Lower leg skin (tissue), 4 donors: ENCODE measurements at regions of chr1 and their contacts with region 1.

Region 1: DNA sequence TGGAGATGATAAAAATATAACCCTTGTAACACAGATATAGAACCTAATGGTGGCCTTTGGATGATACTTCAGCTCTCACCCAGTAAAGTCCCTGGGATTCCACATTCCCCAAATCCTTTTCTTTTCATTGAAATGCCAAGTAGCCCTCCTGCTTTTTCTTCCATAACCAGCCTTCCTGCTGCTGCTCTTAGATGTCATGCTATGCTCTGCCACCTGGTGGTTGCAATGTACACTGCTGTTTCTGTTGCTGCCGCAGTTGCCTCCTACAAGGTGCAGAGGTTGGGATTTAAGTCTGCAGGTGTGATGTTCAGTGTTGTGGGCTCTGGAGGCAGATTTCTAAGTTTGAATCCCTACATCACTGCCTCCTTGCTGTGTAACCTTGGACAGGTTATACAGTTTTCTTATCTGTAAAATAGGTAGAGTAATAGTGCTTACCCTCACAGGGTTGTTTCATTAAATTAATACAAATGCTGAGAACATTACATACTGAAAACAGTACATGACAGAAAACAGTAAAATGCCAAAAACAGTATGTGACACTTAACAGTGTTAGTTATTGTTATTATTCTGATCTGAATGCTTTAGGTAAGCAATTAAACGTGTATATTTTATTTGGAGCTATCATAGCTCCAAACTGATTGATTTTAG is 64.3 kb downstream of the CAMSAP2 start:
- DNase-seq: peak; percentile 77 to 93
- H3K4me3 ChIP-seq: no peak overlapping the region
- CTCF ChIP-seq: peak in 1 of 3 donors; percentile 76
- POLR2A ChIP-seq: no peak

Region 2: DNA sequence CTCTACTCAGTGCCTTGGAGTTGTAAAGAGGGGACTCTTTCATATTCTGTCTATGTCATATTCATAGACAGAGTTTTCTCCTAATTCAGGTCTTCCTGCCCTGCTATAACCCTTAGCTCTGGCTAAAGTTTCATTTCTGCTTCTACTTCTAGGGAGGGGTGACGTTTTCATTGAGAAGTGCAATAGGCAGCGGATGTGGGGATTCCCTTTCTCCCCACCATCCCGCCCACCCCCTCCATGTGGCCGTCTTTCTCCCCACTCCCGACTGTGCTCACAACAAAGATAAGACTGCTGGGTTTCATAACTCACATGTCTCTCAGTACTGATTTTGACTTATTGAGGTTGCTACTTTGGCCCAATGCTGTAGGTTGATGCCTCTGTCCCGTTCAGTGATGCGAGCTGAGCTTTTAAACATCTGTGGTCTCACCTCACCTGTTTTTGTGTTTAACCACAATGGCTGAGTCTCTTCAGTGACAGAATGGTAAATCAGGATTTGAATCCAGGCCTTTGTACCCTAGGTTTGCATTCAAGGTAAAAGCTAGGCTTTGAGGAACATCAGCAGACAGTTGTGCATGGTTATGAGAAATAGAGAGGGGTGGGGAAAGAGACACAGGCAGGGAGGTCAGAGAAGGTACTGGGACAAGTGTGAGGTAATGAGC is 174.6 kb before region 1 on chr1:
- intact Hi-C with region 1: loop called (anchors 5 kb)
- DNase-seq: no peak
- H3K4me3 ChIP-seq: no peak overlapping the region
- CTCF ChIP-seq: no peak
- POLR2A ChIP-seq: no peak

Region 3: GRCh38 chr1:200780545-200781369 is 22.2 kb before region 1 on chr1:
- intact Hi-C with region 1: no loop called
- DNase-seq: no peak
- H3K4me3 ChIP-seq: no peak overlapping the region
- CTCF ChIP-seq: no peak
- POLR2A ChIP-seq: no peak